PC-9 (cell line): ENCODE measurements at regions of chr2 and their contacts with region 1.

Region 1: GRCh38 chr2:85741833-85742455 is 11.8 kb upstream of the ATOH8 start:
- DNase-seq: no peak
- H3K4me3 ChIP-seq: no peak overlapping the region; the same call in 1 of the 2 replicates
- H3K27ac ChIP-seq: 0 out of 2 replicates have a peak overlapping the region, but pooled peaks have one; percentile 13
- H3K4me1 ChIP-seq: peaks cover 17% of the 10 kb centered on the region
- H3K27me3 ChIP-seq: 0 out of 2 replicates have a peak, but pooled peaks cover 12% of the 10 kb centered on the region
- CTCF ChIP-seq: no peak

Region 2: DNA sequence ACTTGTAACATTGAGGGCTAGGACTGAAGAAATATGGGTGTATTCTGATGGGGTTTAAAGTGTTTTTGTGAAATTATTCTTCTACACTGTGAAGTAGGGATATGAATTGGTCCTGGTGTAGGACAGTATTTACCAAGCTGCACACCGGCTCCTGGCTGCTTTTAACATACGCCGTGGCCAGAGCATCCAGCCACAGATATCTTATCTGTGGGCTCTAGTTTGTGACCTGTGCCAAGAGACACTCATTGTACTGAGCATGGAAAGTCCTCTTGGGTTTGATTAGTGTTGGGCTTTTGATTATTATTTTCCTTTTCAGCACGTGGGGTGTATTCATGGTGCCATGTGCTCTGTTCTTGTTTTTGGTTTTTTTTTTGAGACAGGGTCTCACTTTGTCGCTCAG is 118.0 kb before region 1 on chr2:
- CTCF ChIA-PET with region 1: no interaction called
- POLR2A ChIA-PET with region 1: no interaction called
- intact Hi-C with region 1: no loop called
- DNase-seq: no peak
- H3K4me3 ChIP-seq: no peak overlapping the region
- H3K27ac ChIP-seq: no peak overlapping the region
- H3K4me1 ChIP-seq: peaks cover 7% of the 10 kb centered on the region; the same call in 1 of the 2 replicates
- H3K27me3 ChIP-seq: no peaks in the 10 kb centered on the region
- CTCF ChIP-seq: no peak

Region 3: GRCh38 chr2:85655961-85656417 is 86.0 kb before region 1 on chr2:
- CTCF ChIA-PET with region 1: no interaction called
- POLR2A ChIA-PET with region 1: interaction called, 19 read pairs
- intact Hi-C with region 1: no loop called
- DNase-seq: no peak
- H3K4me3 ChIP-seq: no peak overlapping the region
- H3K27ac ChIP-seq: 0 out of 2 replicates have a peak overlapping the region, but pooled peaks have one; percentile 10
- H3K4me1 ChIP-seq: no peaks in the 10 kb centered on the region; the same call in 1 of the 2 replicates
- H3K27me3 ChIP-seq: no peaks in the 10 kb centered on the region
- CTCF ChIP-seq: no peak

Region 4: DNA sequence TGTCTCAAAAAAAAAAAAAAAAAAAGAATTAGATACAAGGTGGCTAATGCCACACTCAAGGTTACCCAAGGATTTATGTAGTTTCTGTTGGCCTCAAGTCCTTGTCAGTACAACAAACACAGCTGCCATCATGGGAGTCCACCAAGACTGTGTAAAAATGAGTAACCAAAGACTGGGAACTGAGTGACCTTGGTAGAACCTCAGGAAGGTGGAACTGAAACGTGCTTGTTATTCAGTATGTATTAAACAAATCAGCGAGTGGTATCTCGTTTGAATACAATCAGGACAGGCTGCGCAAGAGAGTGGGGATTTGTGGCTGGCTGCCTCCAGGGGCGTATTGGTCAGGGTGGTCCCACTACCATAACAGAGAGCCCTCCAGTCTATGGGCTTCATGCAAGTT is 72.4 kb before region 1 on chr2:
- CTCF ChIA-PET with region 1: no interaction called
- POLR2A ChIA-PET with region 1: no interaction called
- intact Hi-C with region 1: no loop called
- DNase-seq: no peak
- H3K4me3 ChIP-seq: no peak overlapping the region
- H3K27ac ChIP-seq: peak overlapping the region; percentile 47; the same call in 1 of the 2 replicates
- H3K4me1 ChIP-seq: peaks cover 15% of the 10 kb centered on the region
- H3K27me3 ChIP-seq: no peaks in the 10 kb centered on the region
- CTCF ChIP-seq: no peak

Region 5: DNA sequence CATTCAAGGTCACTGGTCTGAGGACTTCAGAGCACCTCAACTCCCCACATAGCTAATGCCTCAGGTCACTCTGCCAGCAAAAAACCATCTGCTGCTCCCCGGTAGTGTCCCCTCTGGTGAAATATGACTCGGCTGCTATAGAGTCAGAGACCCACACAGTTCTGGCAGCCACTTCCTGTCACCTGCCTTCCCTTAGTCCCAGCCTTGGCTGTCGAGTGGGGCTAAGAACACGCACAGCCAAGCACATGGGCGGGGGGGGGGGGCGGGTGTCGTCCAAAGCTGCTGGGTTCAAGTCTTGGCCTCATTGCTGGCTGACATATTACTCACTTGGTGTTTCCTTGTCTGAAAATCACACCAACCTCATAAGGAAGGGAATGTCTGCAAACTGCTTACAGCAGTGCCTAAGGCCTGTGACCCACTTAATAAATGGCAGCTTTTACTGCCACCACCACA is 326.2 kb after region 1 on chr2:
- CTCF ChIA-PET with region 1: no interaction called
- POLR2A ChIA-PET with region 1: no interaction called
- intact Hi-C with region 1: no loop called
- DNase-seq: no peak
- H3K4me3 ChIP-seq: no peak overlapping the region
- H3K27ac ChIP-seq: no peak overlapping the region
- H3K4me1 ChIP-seq: peaks cover 26% of the 10 kb centered on the region
- H3K27me3 ChIP-seq: no peaks in the 10 kb centered on the region
- CTCF ChIP-seq: no peak

Region 6: DNA sequence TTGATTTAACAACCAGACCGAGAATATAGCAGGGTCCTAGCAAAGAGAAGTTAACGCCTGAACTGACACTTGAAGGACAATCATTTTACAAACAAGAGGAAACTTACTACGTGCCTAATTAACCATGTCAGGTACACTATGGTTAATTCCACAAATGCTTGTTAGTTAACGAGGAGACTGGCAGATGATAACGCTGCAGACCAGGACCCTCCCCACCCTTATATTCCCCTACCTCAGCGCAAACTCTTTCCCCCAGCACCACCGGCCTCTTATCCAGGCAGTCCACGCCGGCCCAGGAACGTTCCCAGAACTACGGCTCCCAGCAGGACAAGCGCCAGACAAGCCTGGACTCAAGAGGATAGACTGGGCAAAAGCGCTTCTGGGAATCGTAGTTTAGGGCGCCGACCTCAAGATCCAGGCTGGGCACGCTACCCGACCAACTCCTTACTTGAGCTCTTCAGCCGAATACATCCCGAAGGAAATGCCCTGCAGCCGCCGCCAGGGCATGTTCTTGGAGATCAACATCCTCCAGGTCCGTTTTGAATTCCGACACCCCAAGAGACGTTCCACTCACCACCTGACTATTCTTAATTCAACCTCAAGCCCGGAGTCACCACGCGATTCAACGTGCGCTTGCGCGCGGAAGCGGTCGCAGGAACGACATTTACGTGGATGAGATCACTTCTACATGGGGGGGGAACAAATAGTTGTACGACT is 363.5 kb after region 1 on chr2 and contains the start of gene POLR1A:
- CTCF ChIA-PET with region 1: interaction called, 19 read pairs
- POLR2A ChIA-PET with region 1: interaction called, 41 read pairs
- intact Hi-C with region 1: no loop called
- DNase-seq: peak; percentile 79 to 84
- H3K4me3 ChIP-seq: peak within 1 kb of the TSS; percentile 94
- H3K27ac ChIP-seq: peak within 1 kb of the TSS; percentile 58
- H3K4me1 ChIP-seq: peaks cover 27% of the 10 kb centered on the region
- H3K27me3 ChIP-seq: no peaks in the 10 kb centered on the region
- CTCF ChIP-seq: no peak
- total RNA-seq, gene POLR1A: 23.1 and 29.7 TPM in 2 replicates